Heart left ventricle (tissue), 16 donors: ENCODE measurements at regions of chr4 and their contacts with region 1.

Region 1: GRCh38 chr4:147629783-147630730 is 12.9 kb downstream of the TMEM184C start:
- DNase-seq: no peak
- ATAC-seq: no peak
- H3K4me3 ChIP-seq: no peak overlapping the region
- H3K27ac ChIP-seq: no peak overlapping the region
- H3K4me1 ChIP-seq: no peaks in the 10 kb centered on the region
- H3K27me3 ChIP-seq: no peaks in the 10 kb centered on the region
- CTCF ChIP-seq: no peak
- POLR2A ChIP-seq: no peak

Region 2: DNA sequence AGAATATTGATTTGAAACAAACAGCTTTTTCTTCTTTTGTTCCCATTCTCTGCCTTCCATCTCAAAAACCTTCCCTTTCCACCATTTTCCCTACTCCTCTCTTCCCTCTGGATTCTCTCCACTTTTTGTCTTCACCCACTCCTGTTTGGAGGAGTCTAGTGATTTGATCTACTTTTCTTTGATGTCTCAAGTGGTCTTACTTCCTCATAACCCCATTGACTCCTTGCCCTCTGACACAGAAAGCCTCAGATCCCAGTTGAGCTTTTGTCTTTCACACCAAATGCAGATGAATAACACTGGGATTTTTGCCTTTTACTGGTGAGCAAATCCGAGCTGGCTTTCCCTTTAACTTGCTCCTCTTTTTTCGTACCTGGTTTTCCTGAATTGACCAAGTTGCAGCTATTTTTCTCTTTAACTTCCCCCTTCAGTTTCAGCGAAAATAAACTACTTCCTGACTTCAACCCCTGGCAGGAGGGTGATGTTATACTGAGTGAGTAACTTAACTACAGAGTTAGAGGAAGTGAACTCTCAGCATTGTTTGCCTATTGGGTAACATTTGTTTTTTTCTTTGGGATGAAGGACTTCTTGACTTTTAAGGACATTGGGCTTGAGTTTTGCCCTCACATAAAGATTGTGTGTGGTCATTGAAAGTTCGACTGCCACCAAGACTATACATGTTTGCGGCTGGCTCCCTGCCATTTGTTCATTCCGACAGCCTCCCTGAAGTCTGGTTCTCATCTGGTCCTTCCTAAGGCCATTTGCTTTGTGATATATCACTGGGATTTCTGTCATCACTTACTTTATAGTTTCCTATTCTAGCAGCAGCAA is 1205.0 kb after region 1 on chr4:
- intact Hi-C with region 1: loop called in 1 of 10 experiments (anchors 10 kb)
- DNase-seq: no peak
- ATAC-seq: peak in 1 of 4 donors; percentile 31
- H3K4me3 ChIP-seq: no peak overlapping the region
- H3K27ac ChIP-seq: no peak overlapping the region
- H3K4me1 ChIP-seq: peaks cover 0 to 9% (median 0%) of the 10 kb centered on the region in 12 donors
- H3K27me3 ChIP-seq: no peaks in the 10 kb centered on the region
- CTCF ChIP-seq: no peak
- POLR2A ChIP-seq: no peak